HEK293 (cell line): ENCODE measurements at regions of chr22 and their contacts with region 1.

Region 1: DNA sequence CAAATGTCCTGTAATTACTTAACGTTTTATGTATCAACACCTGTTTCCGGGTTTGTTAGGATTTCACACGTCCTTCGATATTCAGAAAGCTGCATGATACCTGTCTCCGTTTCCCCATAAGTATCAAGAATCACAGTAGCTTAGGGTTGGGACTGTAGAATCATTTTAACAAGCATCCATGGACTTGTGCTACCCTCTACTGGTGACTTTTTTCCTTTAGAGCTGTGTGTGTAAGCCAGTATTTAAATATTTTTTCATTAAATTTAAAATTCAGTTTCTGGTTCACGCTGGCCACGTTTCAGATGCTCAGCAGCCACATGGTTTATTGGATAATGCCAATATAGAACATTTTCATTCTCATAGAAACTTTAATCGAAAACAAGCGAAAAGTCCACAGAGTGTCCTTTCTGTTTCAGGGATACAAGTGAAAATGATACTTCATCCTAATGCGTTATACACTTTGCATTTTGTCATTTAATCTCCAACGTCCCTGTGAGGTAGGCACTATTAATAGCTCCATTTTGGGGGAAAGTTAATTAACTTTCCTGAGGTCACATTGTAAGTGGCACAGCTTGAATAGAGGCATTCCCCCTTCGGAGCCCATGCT is 61.5 kb upstream of the SLC25A18 start:
- H3K4me3 ChIP-seq: no peak overlapping the region
- H3K27ac ChIP-seq: no peak overlapping the region
- H3K4me1 ChIP-seq: no peaks in the 10 kb centered on the region
- CTCF ChIP-seq: peak; percentile 34; the same call in 1 of the 2 replicates

Region 2: GRCh38 chr22:17077255-17077654 is 424.5 kb before region 1 on chr22:
- CTCF ChIA-PET with region 1: interaction called, 38 read pairs
- POLR2A ChIA-PET with region 1: interaction called, 7 read pairs
- H3K4me3 ChIP-seq: no peak overlapping the region
- H3K27ac ChIP-seq: no peak overlapping the region
- H3K4me1 ChIP-seq: no peaks in the 10 kb centered on the region
- CTCF ChIP-seq: no peak

Region 3: GRCh38 chr22:17201285-17201945 is 300.4 kb before region 1 on chr22:
- CTCF ChIA-PET with region 1: interaction called, 13 read pairs
- POLR2A ChIA-PET with region 1: no interaction called
- H3K4me3 ChIP-seq: no peak overlapping the region
- H3K27ac ChIP-seq: no peak overlapping the region
- H3K4me1 ChIP-seq: no peaks in the 10 kb centered on the region
- CTCF ChIP-seq: no peak

Region 4: DNA sequence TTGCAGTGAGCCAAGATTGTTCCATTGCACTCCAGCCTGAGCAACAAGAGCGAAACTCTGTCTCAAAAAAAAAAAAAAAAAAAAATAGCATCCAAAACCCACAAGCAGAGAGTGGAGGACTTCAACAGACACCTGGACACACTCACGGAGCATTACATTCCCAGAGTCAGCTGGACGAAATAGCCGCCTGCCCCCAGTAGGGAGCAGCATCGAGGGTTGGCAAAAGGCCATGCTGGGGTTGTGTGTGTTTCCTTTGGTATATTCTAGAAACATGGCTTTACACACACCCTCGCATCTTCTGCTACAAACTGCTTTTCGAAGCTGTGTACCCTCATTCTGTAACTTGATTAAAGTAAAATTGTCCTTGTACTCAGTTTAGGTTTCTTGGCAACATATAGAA is 287.8 kb before region 1 on chr22:
- CTCF ChIA-PET with region 1: interaction called, 13 read pairs
- POLR2A ChIA-PET with region 1: no interaction called
- H3K4me3 ChIP-seq: no peak overlapping the region
- H3K27ac ChIP-seq: no peak overlapping the region
- H3K4me1 ChIP-seq: no peaks in the 10 kb centered on the region
- CTCF ChIP-seq: no peak

Region 5: DNA sequence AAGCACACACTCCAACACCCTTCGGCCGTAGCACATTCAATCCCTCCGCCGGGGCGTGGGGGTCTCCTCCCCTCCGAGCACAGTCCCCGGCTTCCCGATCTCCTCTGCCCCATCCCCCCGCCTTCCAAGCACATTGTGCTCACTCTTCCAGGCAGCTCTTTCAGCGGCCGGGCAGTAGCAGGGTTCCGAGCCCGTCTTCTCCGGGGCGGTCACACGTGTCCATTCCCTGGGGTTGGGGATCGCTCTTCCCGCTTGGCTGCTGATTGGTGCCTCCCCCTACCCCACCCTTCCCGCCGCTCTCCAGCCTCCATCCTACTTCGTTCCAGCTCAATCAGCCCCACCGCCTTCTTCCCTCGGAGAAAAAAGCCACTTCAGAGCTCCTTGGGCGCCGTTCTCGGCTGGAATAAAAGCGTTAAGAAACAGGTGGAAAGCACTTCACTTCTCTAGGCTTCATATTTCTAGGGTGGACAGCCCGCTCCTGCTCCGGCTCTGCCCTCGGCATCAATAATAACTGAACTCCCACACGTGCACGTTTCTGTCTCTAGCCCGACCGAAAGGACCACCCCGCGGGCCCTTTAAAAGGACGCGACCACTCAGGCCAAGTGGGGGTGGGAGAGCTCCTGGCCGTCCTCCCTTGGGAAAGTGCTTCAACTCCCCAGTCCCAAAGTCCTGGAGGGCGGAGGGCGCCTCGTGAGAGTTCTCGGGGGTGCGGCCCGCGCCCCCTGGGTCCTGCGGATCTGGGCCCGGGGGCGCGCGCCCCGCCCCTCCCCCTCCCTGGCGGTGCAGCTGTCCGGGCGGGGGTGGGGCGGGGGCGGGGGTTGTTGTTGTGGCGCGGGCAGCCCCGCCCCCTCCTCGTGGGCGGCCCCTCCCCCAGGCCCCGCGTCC is 133.0 kb before region 1 on chr22:
- CTCF ChIA-PET with region 1: interaction called, 35 read pairs
- POLR2A ChIA-PET with region 1: interaction called, 7 read pairs
- H3K4me3 ChIP-seq: peak overlapping the region; percentile 92
- H3K27ac ChIP-seq: peak overlapping the region; percentile 93
- H3K4me1 ChIP-seq: peaks cover 3% of the 10 kb centered on the region
- CTCF ChIP-seq: no peak

Region 6: GRCh38 chr22:17436382-17436980 is 65.3 kb before region 1 on chr22:
- CTCF ChIA-PET with region 1: interaction called, 10 read pairs
- POLR2A ChIA-PET with region 1: no interaction called
- H3K4me3 ChIP-seq: no peak overlapping the region
- H3K27ac ChIP-seq: peak overlapping the region; percentile 52; the same call in 1 of the 2 replicates
- H3K4me1 ChIP-seq: peaks cover 24% of the 10 kb centered on the region
- CTCF ChIP-seq: no peak

Region 7: DNA sequence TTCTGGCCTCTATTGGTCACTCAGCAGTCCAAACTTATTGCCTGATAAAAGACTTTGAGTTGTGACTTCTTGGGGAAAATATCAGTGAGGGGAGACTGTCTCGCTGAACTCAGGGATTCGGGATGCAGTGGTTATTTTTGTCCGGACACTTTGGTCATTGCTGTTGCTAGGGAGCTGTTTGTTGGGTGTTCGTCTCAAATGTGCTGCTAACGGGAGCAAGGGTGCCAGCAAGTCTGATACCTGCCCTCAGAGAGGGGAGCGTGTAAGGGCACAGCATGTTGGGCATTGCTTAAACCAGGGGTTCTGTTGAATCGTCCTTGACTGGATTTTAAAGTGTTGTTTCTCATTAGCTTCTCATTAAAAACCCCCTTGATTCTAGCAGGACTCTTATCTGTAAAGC is 12.3 kb after region 1 on chr22:
- CTCF ChIA-PET with region 1: interaction called, 21 read pairs
- POLR2A ChIA-PET with region 1: no interaction called
- H3K4me3 ChIP-seq: no peak overlapping the region
- H3K27ac ChIP-seq: no peak overlapping the region
- H3K4me1 ChIP-seq: no peaks in the 10 kb centered on the region
- CTCF ChIP-seq: no peak

Region 8: DNA sequence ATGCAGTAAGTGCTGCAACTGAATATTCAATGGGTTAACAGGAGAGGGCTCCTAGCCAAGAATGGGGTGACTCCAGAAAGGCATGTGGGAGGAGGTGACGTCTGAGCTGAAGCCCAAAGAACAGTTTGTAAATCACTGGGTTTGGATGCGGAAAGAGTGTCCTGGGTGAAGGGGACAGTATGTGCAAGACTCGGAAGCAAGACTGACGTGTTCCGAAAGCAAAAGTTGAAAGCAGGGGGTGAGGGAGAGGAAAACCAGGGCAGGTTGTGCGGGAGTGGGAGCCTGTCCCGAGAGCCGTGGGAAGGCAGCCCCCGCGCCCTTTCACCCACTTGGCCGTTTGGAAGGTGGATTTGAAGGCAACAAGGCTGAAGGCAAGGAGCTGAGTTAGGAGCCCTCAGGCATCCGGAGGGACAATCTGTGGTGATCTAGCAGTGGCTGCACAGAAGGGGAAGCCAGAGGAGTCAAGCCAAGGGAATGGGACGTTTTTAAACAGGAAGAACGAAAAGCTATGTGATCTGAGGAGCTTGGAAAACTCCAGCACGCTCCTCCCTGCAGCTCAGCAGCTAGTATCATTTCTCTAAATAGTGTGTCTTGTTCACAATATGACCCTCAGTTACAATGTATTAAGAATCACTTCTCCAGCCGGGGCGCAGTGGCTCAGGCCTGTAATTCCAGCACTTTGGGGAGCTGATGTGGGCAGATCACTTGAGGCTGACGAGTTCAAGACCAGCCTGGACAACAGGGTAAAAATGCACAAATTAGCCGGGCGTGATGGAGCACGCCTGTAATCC is 69.3 kb after region 1 on chr22:
- CTCF ChIA-PET with region 1: no interaction called
- POLR2A ChIA-PET with region 1: no interaction called
- H3K4me3 ChIP-seq: no peak overlapping the region
- H3K27ac ChIP-seq: no peak overlapping the region
- H3K4me1 ChIP-seq: peaks cover 6% of the 10 kb centered on the region; the same call in 1 of the 2 replicates
- CTCF ChIP-seq: no peak

Region 9: DNA sequence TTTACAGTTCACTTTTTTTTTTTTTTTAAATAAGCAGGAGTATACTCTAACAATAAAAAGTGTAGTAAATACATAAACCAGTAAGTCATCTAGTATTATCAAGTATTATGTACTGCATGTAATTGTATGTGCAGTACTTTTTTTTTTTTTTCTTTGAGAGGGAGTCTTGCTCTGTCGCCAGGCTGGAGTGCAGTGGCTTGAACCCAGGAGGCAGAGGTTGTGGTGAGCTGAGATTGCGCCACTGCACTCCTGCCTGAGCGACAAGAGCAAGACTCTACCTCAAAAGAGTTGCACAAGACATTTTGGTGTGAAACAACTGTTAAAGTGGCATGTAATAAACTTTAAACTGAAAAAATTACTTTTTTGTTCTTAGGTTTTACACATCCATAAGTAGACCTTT is 153.5 kb after region 1 on chr22:
- CTCF ChIA-PET with region 1: no interaction called
- POLR2A ChIA-PET with region 1: no interaction called
- H3K4me3 ChIP-seq: no peak overlapping the region
- H3K27ac ChIP-seq: no peak overlapping the region
- H3K4me1 ChIP-seq: no peaks in the 10 kb centered on the region
- CTCF ChIP-seq: no peak